B cell (primary cell): ENCODE measurements at regions of chr9 and their contacts with region 1.

Region 1: DNA sequence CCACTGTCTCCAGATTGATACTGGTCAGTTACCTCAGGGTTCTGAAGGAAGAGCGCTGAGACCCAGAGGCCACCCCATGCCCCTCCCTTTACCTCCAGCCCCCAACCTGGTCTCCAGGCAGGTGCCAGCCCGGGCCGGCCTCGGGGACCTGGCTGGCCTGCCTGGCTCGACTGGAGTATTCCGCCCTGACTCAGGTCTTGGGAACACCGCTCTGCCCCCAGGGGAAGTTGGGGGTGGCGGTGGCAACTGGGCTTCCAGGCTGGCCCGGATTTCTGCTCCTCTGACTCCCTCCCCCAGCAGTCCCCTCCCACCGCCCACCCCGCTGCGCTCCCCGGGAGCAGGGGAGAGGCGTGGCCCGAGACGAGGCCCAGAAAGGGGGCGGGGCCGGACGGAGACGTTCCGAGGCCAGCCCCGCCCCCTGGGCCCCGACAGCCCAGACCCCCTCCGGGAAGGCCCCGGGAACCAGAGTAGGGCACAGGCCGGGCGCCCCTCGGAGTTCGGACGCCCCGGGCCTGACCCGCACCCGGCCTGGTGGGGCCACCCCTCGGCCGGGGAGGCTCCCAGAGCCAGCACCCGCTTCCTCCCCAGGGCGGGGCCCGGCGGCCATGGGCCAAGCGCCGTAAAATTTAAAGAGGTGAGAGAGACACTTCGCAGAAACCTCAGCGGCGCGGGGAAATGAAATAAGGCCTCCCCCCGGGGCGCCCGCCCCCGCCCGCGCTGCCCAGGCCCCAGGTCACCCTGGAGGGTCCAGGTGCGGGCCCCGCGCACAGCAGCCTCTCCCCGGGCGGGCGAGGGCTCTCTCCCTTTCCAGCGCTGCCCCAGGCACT is 82.4 kb upstream of the ZBTB43 start:
- DNase-seq: peak; percentile 94
- ATAC-seq: peak; percentile 80
- H3K4me3 ChIP-seq: peak overlapping the region; percentile 41 to 95 (median 83)
- H3K4me3 Mint-ChIP-seq: peak overlapping the region; percentile 95
- H3K27ac ChIP-seq: peak overlapping the region; percentile 97 to 98
- H3K27ac Mint-ChIP-seq: peak overlapping the region; percentile 98
- H3K4me1 ChIP-seq: peaks cover 38 to 46% of the 10 kb centered on the region in 2 donors
- H3K4me1 Mint-ChIP-seq: peaks cover 47% of the 10 kb centered on the region
- H3K27me3 ChIP-seq: no peaks in the 10 kb centered on the region
- H3K27me3 Mint-ChIP-seq: no peaks in the 10 kb centered on the region
- CTCF ChIP-seq: no peak

Region 2: GRCh38 chr9:126804696-126805545 is 82.5 kb after region 1 on chr9 and contains the start of gene ZBTB43:
- CTCF ChIA-PET with region 1: no interaction called
- POLR2A ChIA-PET with region 1: interaction called, 3 read pairs
- intact Hi-C with region 1: loop called (anchors 2 kb)
- DNase-seq: peak; percentile 97
- ATAC-seq: peak; percentile 85
- H3K4me3 ChIP-seq: peak within 1 kb of the TSS; percentile 83 to 94 (median 88)
- H3K4me3 Mint-ChIP-seq: peak within 1 kb of the TSS; percentile 87
- H3K27ac ChIP-seq: peak within 1 kb of the TSS; percentile 75 to 89
- H3K27ac Mint-ChIP-seq: peak within 1 kb of the TSS; percentile 97
- H3K4me1 ChIP-seq: peaks cover 17 to 20% of the 10 kb centered on the region in 2 donors
- H3K4me1 Mint-ChIP-seq: peaks cover 31% of the 10 kb centered on the region
- H3K27me3 ChIP-seq: no peaks in the 10 kb centered on the region
- H3K27me3 Mint-ChIP-seq: no peaks in the 10 kb centered on the region
- CTCF ChIP-seq: no peak
- total RNA-seq, gene ZBTB43: 19.5 and 20.2 TPM in 2 replicates

Region 3: DNA sequence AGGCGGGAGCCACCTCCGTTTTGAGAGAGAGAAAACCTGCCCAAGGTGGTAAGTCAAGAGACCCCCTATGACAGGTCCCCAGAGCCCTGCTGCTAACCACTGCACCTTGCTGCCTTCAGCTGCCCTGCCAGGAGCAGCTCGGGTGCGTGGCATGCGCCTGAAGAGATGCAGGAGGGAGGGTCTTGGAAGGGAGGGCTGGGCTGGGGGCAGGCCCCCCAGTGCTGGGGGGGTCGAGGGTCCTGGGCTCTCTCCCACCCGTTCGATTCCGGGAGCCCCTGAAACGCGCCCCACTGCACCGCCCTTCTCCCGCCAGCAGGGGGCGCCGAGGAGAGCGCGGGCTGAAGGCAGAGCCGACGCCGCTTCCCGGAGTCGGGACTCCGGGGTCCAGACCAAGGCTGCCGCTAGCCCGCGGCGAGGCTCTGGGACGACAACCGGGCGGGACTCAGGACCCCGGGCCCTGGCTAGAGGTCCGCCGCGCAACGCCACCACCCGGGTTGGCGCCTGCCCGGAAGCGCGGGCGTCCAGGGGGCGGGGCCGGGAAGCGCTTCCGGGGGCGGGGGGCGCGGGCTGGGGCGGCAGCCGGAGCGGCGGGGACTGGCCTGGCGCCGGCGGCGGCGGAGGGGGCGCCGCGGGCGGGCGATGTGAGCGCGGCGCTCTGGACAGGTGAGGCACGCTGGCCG is 137.8 kb after region 1 on chr9 and contains the start of gene ZBTB34:
- CTCF ChIA-PET with region 1: no interaction called
- POLR2A ChIA-PET with region 1: no interaction called
- intact Hi-C with region 1: loop called (anchors 2 kb)
- DNase-seq: peak; percentile 87
- ATAC-seq: peak; percentile 84
- H3K4me3 ChIP-seq: peak within 1 kb of the TSS; percentile 58 to 88 (median 81)
- H3K4me3 Mint-ChIP-seq: peak within 1 kb of the TSS; percentile 93
- H3K27ac ChIP-seq: peak within 1 kb of the TSS; percentile 31 to 79
- H3K27ac Mint-ChIP-seq: peak within 1 kb of the TSS; percentile 91
- H3K4me1 ChIP-seq: peaks cover 26 to 32% of the 10 kb centered on the region in 2 donors
- H3K4me1 Mint-ChIP-seq: peaks cover 33% of the 10 kb centered on the region
- H3K27me3 ChIP-seq: peaks cover 0 to 14% (median 0%) of the 10 kb centered on the region in 4 experiments
- H3K27me3 Mint-ChIP-seq: peaks cover 18% of the 10 kb centered on the region
- CTCF ChIP-seq: peak; percentile 100
- total RNA-seq, gene ZBTB34: 12.1 and 13.2 TPM in 2 replicates

Region 4: DNA sequence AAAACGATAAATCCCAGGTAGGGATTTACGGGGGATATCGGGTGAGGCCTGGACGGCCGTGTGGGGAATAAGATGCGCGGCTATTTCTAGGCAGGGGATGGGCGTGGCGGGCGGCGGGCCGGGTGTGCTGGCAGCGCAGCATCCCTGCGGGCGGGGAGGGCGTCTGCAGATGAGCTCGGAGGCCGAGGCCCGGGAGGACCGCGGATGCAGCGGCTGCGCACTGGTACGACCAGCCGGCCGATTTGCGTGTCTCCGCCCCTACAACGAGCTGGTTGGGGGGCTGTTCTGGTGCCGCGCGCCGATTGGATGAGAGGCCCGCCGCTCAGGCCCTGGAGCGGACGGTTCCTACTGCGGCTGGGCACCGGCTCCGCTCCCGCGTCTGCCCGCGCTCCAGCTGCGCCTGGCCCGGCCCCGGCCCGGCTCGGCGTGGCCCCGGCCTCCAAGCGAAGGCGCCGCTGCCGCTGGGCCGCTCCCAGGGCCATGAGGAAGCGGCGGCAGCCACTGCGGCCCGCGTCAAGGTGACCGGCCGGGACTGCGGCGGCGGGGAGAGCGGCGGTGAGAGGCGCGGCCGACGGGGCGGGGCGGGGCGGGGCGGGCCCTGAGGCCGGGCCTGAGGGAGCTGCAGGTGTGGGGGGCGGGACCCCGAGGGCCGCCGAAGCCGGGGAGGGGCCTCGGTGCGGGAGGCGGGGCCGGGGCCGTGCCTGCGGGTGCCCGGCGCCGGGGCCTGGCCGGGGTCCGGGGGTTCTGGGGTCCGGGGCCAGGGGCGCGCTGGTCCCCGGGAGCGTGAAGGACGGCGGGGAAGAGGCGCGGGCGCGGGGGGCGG is 192.2 kb after region 1 on chr9 and contains the start of gene RALGPS1:
- CTCF ChIA-PET with region 1: no interaction called
- POLR2A ChIA-PET with region 1: no interaction called
- intact Hi-C with region 1: loop called (anchors 2 kb)
- DNase-seq: peak; percentile 96
- ATAC-seq: peak; percentile 94
- H3K4me3 ChIP-seq: peak within 1 kb of the TSS in 4 of 5 experiments; percentile 33 to 63 (median 44)
- H3K4me3 Mint-ChIP-seq: peak within 1 kb of the TSS; percentile 89
- H3K27ac ChIP-seq: peak within 1 kb of the TSS; percentile 24 to 33
- H3K27ac Mint-ChIP-seq: peak within 1 kb of the TSS; percentile 86
- H3K4me1 ChIP-seq: peaks cover 3 to 13% of the 10 kb centered on the region in 2 donors
- H3K4me1 Mint-ChIP-seq: peaks cover 12% of the 10 kb centered on the region
- H3K27me3 ChIP-seq: peaks cover 0 to 5% (median 0%) of the 10 kb centered on the region in 4 experiments
- H3K27me3 Mint-ChIP-seq: peaks cover 17% of the 10 kb centered on the region
- CTCF ChIP-seq: no peak
- total RNA-seq, gene RALGPS1: 39.9 and 48.6 TPM in 2 replicates